A549 (cell line): ENCODE measurements at regions of chr19 and their contacts with region 1.

Region 1: GRCh38 chr19:32691291-32691951 is at the start of gene NUDT19:
- DNase-seq: peak; percentile 94 to 98
- ATAC-seq: peak; percentile 96 to 97
- H3K4me3 ChIP-seq: peak within 1 kb of the TSS; percentile 59
- H3K27ac ChIP-seq: peak within 1 kb of the TSS; percentile 77 to 94
- H3K4me1 ChIP-seq: peaks cover 34% of the 10 kb centered on the region
- CTCF ChIP-seq: no peak
- EP300 ChIP-seq: no peak
- POLR2A ChIP-seq: peak; percentile 92
- RAD21 ChIP-seq: peak in 1 of 2 experiments; percentile 25; a peak in 1 of 5 replicates
- polyA plus RNA-seq, gene NUDT19: 28.3 and 32.6 TPM in 2 replicates

Region 2: DNA sequence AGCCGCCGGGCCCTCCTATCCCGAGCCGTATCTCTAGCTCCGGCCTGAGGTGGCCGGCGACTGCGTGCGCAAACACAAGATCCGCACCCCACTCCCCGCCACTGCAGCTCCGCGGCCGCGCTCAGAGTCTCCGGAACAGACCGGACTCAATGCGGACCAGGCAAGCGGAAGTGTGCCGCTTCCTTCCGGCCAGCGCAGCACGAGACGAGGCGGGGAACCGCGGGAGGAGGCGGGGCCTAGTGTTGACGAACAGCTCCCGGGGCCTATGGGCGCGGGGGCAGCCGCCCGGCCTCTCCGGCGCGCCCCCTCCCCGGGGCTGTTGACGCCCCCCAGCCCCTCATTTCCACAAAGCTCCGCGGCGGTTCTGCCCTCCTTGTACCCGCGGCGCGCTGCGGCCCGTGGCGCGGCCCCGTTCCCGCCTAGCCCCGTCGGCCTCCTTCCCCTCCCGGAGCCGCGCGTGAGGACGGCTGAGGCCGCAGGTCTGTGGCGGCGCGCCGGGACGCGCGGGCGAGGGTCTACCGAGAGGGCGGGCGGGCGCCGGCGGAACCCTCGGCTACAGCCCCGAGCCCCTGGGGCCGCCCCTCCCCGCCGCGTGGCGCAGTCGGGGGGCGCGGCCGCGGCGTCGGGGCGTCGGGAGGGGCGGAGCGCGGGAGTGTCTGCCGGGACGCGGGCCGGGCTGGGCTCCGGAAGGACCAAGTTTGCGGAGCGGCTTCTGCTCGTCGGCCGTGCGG is 285.8 kb before region 1 on chr19 and contains the start of gene DPY19L3:
- CTCF ChIA-PET with region 1: no interaction called
- POLR2A ChIA-PET with region 1: no interaction called
- DNase-seq: peak; percentile 98 to 99
- ATAC-seq: peak; percentile 97 to 98
- H3K4me3 ChIP-seq: peak within 1 kb of the TSS; percentile 84
- H3K27ac ChIP-seq: peak within 1 kb of the TSS; percentile 94 to 97
- H3K4me1 ChIP-seq: peaks cover 24% of the 10 kb centered on the region
- CTCF ChIP-seq: no peak
- EP300 ChIP-seq: no peak
- POLR2A ChIP-seq: peak; percentile 97
- RAD21 ChIP-seq: no peak
- polyA plus RNA-seq, gene DPY19L3: 28.9 and 29.6 TPM in 2 replicates

Region 3: DNA sequence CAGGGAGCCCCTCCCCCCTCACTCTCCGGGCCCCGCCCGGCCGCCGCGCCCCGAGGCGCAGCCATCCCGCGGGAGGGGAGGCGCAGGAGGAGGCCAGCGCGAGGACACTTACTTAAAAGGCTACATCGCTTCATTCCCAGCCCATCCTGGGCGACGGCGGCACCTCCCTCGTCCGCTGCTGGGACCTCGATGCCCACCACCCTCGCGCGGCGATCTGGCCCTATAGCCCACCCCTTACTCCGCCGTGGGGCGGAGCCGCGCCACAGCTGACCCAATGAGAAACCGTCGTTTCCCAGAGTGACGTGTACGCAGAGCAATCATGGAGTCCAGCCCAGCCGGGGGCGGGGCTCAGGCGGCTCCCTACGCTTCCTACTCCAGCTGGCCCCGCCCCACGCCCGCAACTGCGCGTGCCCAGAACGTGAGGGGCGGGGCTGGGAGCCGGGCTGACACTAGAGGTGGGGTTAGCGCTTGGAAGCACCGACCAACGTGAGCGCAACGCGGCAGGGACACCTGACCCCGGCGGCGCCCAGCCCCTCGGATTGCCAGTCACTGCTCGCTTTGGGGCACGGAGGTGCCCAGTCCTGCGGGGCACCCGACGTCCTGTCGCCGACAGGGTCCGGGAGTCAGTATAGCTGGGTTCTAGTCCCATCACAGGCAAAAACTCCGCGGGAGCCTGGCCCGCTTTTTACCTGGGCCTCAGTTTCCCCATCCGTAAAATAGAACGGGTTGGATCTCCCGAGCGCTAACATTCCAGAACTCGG is 16.3 kb before region 1 on chr19 and contains the start of gene ANKRD27:
- CTCF ChIA-PET with region 1: interaction called, 11 read pairs
- POLR2A ChIA-PET with region 1: interaction called, 24 read pairs
- DNase-seq: peak; percentile 99 to 100
- ATAC-seq: peak; percentile 82 to 94
- H3K4me3 ChIP-seq: peak within 1 kb of the TSS; percentile 84
- H3K27ac ChIP-seq: peak within 1 kb of the TSS; percentile 82 to 88
- H3K4me1 ChIP-seq: peaks cover 16% of the 10 kb centered on the region
- CTCF ChIP-seq: no peak
- EP300 ChIP-seq: no peak
- POLR2A ChIP-seq: peak; percentile 87
- RAD21 ChIP-seq: no peak
- polyA plus RNA-seq, gene ANKRD27: 60.8 and 62.1 TPM in 2 replicates

Region 4: DNA sequence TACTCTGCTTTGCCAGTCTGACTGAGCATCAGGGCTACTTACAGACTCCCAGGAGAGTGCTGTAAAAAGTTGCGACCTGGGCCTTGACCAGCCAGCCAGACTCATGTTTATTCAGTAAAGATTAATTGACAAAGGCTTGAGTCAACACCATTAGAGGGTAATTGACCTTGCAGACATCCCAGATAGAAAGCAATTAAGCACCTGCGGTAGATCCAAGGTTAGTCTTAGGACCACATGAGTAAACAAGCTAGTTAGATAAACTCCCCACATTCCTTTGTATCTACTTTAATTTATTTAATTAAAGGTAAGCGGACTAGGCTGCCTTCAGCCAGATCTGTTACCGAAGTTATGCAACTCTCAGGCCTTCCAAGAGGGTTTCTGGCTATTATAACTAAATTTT is 10.7 kb after region 1 on chr19:
- CTCF ChIA-PET with region 1: interaction called, 13 read pairs
- POLR2A ChIA-PET with region 1: interaction called, 11 read pairs
- DNase-seq: no peak
- ATAC-seq: no peak
- H3K4me3 ChIP-seq: no peak overlapping the region
- H3K27ac ChIP-seq: no peak overlapping the region
- H3K4me1 ChIP-seq: no peaks in the 10 kb centered on the region
- CTCF ChIP-seq: no peak
- EP300 ChIP-seq: no peak
- POLR2A ChIP-seq: no peak
- RAD21 ChIP-seq: no peak